Panc1 (cell line): ENCODE measurements at regions of chr17 and their contacts with region 1.

Region 1: DNA sequence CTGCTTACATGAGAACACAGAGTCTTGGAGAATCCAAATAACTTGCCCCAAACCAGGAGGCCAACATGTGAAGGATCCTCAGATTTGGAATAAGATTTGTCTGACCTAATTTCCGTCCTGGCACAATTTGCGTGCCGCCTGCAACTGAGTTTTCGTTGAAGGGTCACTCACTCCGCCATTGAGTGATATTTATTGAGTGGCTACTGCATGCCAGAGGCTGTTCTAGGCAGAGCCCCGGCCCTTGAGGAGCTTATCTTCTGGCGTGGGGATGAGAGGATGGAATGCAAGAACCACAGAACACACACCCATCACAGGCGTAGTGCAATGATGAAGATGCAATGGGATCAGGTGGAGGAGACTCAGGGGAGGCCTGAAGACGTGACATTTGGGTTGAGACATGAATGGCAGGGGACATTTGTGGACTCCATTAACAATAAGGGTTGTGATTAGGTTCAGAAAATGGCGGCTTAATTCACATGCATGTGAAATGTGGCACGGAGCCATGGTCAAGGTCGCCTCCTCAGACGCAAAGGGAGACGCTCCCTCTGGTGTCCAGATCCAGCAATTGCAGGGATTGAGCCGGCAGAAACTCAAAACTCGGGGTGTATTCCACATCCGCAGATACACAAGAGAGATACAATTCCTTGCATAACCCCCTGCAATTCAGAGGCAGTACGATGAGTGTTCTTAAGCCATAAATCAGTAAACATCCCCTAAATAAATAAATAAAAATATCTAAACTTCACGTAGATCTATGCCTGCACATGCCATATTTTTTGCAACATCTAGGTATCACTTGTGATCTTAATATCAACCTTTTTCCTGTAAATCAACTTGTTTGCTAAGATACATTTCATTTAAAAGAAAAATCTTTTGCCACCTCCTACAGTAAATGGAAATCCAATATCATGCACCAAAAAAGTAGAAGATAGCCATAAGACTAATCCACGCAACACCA is 57.9 kb upstream of the CACNG4 start:
- DNase-seq: peak; percentile 41
- ATAC-seq: 0 out of 2 replicates have a peak, but pooled peaks have one; percentile 42
- H3K4me3 ChIP-seq: no peak overlapping the region
- H3K27ac ChIP-seq: no peak overlapping the region
- H3K4me1 ChIP-seq: no peaks in the 10 kb centered on the region
- H3K27me3 ChIP-seq: no peaks in the 10 kb centered on the region
- CTCF ChIP-seq: peak; percentile 88

Region 2: DNA sequence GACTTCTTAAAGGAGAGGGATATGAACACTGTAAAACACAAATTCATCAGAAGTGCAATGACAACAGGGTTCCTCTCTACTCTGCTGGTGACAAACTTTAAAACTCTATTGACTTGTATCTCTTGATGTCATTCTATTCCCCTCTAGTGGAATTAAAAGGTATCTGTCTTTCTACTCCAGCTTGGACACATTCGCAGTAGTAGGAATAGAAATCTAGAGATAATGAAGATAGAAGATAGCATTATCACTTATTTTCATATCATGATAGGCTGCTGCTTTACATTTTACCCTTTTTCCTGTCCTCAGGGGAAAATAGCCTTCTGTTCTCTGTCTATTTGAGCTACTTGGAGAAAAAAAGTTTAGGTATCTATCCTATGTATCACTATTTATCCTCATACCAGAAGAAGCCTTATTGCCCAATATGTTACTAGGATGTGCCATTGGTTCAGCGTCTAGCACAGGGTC is 281.3 kb before region 1 on chr17:
- CTCF ChIA-PET with region 1: no interaction called
- POLR2A ChIA-PET with region 1: no interaction called
- in situ Hi-C with region 1: no loop called
- intact Hi-C with region 1: no loop called
- DNase-seq: no peak
- ATAC-seq: peak; percentile 77; the same call in 1 of the 2 replicates
- H3K4me3 ChIP-seq: no peak overlapping the region
- H3K27ac ChIP-seq: no peak overlapping the region
- H3K4me1 ChIP-seq: no peaks in the 10 kb centered on the region
- H3K27me3 ChIP-seq: no peaks in the 10 kb centered on the region
- CTCF ChIP-seq: peak; percentile 46; the same call in 1 of the 2 replicates

Region 3: DNA sequence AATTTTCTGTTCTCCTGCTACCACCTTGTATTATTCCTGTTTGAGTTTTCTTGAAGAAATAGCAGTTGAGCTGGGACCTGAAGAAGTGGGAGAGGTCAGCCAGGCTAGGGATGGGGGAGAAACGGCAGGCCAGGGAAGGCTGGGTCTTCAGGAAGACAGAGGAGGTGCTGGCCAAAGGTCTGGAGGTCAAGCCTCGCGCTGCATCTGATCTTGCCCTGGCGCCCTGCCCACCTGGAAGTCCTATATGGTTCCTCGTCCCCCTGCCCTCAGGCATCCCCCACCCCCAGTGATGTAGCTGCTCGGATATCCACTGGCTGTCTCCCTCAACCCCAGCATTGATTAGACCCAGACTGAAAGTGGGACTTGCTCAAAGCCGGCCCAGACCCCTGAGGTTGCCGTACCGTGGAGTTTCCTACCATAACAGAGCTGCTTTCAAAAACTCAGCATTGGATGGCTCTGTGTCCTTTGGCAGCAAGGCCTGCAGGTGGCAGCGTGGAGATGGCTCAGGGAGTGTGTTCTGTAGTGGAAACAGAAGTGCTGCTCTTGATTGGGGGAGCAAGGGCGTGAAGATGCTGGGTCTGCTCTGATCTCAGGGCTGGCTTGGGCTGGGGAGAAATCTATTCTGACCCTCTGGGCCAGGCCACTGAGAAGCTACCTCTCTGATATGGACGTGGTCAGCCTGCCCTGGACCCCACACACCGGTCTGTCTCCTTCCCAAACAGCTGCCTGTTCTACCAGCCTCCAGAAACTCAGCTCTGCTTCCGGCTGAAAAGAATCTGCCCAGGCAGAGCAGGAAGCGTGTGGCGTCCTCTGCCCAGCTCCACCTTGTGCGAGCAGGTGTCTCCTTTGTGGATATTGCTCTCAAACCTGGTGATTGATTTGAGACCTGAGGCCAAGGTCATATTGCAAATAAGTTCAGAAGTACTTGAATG is 178.7 kb before region 1 on chr17:
- CTCF ChIA-PET with region 1: no interaction called
- POLR2A ChIA-PET with region 1: no interaction called
- in situ Hi-C with region 1: no loop called
- intact Hi-C with region 1: loop called (anchors 5 kb)
- DNase-seq: peak; percentile 20
- ATAC-seq: peak; percentile 82
- H3K4me3 ChIP-seq: no peak overlapping the region
- H3K27ac ChIP-seq: no peak overlapping the region
- H3K4me1 ChIP-seq: peaks cover 13% of the 10 kb centered on the region
- H3K27me3 ChIP-seq: no peaks in the 10 kb centered on the region
- CTCF ChIP-seq: peak; percentile 70

Region 4: DNA sequence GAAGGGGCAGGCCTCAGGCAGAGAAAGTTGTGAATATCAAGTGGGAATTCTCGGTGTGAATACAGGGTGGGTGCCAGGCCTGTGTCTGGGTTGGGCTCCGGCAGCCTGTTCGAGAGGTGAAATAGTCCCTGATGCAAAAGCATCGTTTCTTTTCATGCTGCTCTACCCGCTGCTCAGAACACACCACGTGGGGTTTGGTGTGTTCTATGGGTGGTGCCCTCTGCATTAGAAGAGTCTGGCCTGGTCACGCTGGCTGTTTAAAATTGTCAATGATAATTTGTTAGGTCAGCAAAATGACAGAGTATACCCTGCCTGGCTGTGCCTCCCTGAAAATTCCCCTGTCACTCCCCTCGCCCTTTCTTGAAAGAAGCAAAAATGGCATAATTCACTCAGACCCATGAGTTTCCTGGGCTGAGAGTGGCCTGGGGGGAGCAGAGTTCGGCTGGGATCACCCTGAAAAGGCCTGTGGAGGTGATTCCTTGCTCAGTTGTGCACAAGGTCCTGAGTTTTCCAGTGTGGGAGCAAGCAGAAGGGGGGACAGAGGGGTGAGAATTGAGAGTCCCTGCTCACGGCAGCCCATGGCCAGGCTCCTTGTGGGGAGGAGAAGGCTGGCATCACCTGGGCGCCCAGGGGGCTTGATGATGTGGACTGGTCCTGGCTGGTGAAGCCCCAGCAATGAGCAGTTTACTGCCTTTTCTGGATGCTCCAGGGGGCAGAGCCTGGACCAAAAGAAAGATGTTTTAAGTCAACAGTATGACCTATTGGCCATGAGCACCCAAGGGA is 68.5 kb before region 1 on chr17:
- CTCF ChIA-PET with region 1: no interaction called
- POLR2A ChIA-PET with region 1: interaction called, 14 read pairs
- in situ Hi-C with region 1: no loop called
- intact Hi-C with region 1: no loop called
- DNase-seq: no peak
- ATAC-seq: no peak
- H3K4me3 ChIP-seq: no peak overlapping the region
- H3K27ac ChIP-seq: no peak overlapping the region
- H3K4me1 ChIP-seq: no peaks in the 10 kb centered on the region
- H3K27me3 ChIP-seq: no peaks in the 10 kb centered on the region
- CTCF ChIP-seq: no peak

Region 5: DNA sequence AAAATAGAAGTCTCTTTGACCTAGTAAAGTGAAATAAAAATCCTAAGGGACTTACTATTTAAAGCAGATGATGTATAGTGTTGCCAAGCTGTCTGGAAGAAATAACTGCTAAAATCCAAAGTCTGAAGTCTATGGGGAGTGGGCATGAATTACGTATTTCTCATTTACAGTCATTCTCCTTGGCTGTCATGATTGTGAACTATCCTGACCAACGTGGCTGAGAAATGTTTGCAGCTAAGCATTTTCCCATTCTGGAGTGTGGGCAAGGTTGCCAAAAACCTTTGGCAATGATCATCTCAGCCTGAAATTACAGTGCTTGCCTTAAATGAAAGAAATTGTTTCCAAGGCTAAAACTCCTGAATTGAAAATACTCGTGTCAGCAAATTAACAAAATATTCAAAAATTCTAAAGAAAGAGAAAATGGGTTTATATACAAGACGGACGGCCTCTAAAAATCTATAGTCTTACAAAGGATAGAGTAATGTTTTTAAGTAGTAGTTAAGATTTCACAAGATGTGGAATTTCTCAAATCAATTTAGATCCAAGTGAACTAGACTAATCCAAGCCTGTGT is 214.8 kb after region 1 on chr17:
- CTCF ChIA-PET with region 1: no interaction called
- POLR2A ChIA-PET with region 1: no interaction called
- in situ Hi-C with region 1: no loop called
- intact Hi-C with region 1: no loop called
- DNase-seq: no peak
- ATAC-seq: no peak
- H3K4me3 ChIP-seq: no peak overlapping the region
- H3K27ac ChIP-seq: no peak overlapping the region
- H3K4me1 ChIP-seq: no peaks in the 10 kb centered on the region
- H3K27me3 ChIP-seq: no peaks in the 10 kb centered on the region
- CTCF ChIP-seq: no peak